Esophagus muscularis mucosa (tissue), 4 donors: ENCODE measurements at regions of chrX and their contacts with region 1.

Region 1: GRCh38 chrX:18425199-18426003 is at the start of gene CDKL5:
- DNase-seq: peak; percentile 98
- H3K4me3 ChIP-seq: peak within 1 kb of the TSS; percentile 72 to 80 (median 74)
- H3K27ac ChIP-seq: peak within 1 kb of the TSS; percentile 76 to 82 (median 80)
- H3K4me1 ChIP-seq: peaks cover 0 to 19% (median 9%) of the 10 kb centered on the region in 4 donors
- H3K27me3 ChIP-seq: peaks cover 0 to 3% (median 0%) of the 10 kb centered on the region in 4 donors
- CTCF ChIP-seq: no peak
- EP300 ChIP-seq: no peak
- POLR2A ChIP-seq: no peak
- total RNA-seq, gene CDKL5: 3.7 to 6.5 (median 4.6) TPM

Region 2: DNA sequence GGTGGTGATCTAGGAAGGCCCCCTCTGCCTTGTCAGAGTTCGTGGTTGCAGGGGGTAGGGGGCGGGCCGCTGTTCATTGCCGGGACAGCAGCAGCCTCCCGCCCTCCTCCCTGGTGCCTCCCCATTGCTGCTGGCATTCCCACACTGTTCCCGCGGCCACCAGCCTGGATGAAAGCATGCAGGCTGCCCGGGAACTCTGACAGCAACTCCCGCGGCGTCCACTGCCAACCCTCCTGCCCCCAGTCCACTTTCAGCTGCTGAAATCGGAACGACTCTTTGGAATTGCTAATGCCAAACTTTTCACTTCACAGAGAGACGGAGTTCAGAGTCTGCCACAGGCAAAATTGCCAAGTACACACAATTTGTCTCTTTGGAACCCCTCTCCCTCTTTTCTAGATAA is 326.6 kb before region 1 on chrX:
- intact Hi-C with region 1: no loop called
- DNase-seq: no peak
- H3K4me3 ChIP-seq: no peak overlapping the region
- H3K27ac ChIP-seq: no peak overlapping the region
- H3K4me1 ChIP-seq: no peaks in the 10 kb centered on the region
- H3K27me3 ChIP-seq: peaks cover 0 to 4% (median 0%) of the 10 kb centered on the region in 4 donors
- CTCF ChIP-seq: no peak
- EP300 ChIP-seq: no peak
- POLR2A ChIP-seq: no peak

Region 3: GRCh38 chrX:18252644-18253359 is 172.6 kb before region 1 on chrX:
- intact Hi-C with region 1: no loop called
- DNase-seq: no peak
- H3K4me3 ChIP-seq: no peak overlapping the region
- H3K27ac ChIP-seq: no peak overlapping the region
- H3K4me1 ChIP-seq: no peaks in the 10 kb centered on the region
- H3K27me3 ChIP-seq: no peaks in the 10 kb centered on the region
- CTCF ChIP-seq: no peak
- EP300 ChIP-seq: no peak
- POLR2A ChIP-seq: no peak

Region 4: DNA sequence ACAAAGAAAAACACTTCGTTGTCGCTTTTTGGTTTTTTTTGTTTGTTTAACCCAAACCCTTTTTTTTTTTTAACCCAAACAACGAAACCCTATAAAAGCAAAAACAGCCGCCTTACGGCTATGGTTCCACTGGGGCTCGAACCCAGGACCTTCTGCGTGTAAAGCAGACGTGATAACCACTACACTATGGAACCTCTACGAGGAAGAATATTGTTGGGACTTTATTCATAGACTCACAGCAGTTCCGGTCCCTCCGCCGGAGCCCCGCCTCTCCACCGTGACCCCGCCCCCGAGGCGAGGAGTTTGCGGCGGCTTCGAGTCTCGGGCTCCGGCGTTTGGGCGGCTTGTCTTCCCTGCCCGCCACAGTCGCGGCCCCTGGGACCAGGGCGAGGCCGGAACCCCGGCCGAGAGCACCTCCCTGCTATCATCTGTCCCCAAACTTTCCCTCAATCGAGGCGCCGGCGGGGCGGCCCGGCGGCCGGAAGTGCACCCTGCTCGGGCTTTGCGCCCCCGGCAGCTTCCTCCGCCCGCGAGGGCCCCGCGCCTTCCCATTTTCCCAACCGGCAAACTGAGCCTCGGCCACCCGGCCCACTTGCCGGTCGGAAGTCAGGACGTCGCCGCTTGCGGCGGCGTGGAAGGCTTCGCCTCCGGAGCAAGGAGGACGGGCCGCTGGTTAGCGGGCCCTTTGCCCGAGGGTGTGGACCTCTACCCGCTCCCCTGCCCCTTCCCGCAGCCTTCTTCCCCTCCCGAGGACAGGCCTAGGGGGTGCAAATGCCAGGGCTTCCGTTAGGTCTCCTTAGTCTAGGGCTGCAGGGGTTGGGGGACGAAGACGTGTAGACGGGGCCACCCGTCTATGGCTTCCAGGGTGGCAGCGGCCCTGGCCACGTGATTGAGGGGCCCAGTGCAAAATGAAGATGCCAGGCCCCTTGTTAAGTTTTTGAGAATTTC is 249.7 kb after region 1 on chrX:
- intact Hi-C with region 1: loop called (anchors 10 kb)
- DNase-seq: peak; percentile 92
- H3K4me3 ChIP-seq: peak overlapping the region; percentile 67 to 71 (median 68)
- H3K27ac ChIP-seq: peak overlapping the region; percentile 77 to 88 (median 84)
- H3K4me1 ChIP-seq: peaks cover 0 to 4% (median 0%) of the 10 kb centered on the region in 4 donors
- H3K27me3 ChIP-seq: peaks cover 0 to 3% (median 0%) of the 10 kb centered on the region in 4 donors
- CTCF ChIP-seq: no peak
- EP300 ChIP-seq: no peak
- POLR2A ChIP-seq: no peak

Region 5: DNA sequence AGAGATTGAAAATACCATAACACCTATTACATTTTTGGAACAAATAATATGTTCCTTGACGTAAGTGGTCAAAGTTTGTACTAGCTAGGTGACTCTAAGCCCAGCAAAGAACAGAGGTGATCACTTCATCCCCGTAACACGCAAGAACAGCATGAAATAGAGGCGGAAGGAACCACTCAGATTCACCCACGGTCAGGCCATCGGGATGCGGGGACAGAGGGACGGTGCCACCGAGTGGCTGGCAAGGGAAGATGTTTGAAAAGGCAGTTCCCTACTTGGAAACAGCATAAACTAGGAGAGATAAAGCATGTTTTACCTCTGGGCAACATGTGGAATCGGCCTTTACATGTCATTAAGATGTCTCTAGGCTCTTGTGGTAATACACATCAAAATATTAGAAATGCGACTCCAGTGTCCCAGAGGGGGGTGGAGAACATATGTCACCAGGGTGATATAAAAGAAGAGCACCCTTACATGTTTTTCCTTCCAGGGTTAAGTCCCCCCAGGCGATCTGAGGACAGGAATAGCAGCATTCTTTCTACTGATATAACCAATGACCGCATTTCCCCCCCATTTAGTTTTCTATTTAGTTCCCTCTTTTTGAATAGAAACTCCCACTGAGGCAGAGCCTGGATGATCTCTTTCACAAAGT is 474.5 kb after region 1 on chrX:
- intact Hi-C with region 1: loop called (anchors 10 kb)
- DNase-seq: no peak
- H3K4me3 ChIP-seq: no peak overlapping the region
- H3K27ac ChIP-seq: no peak overlapping the region
- H3K4me1 ChIP-seq: peaks cover 0 to 16% (median 12%) of the 10 kb centered on the region in 4 donors
- H3K27me3 ChIP-seq: no peaks in the 10 kb centered on the region
- CTCF ChIP-seq: peak in 1 of 3 experiments; percentile 21
- EP300 ChIP-seq: no peak
- POLR2A ChIP-seq: no peak